T-cell (primary cell): ENCODE measurements at regions of chr1 and their contacts with region 1.

Region 1: GRCh38 chr1:209761011-209761635 is 5.3 kb downstream of the TRAF3IP3 start:
- DNase-seq: no peak
- ATAC-seq: no peak
- H3K4me3 ChIP-seq: peak overlapping the region in 1 of 2 donors; percentile 11
- H3K4me3 Mint-ChIP-seq: peak overlapping the region; percentile 51 to 92 (median 56)
- H3K27ac ChIP-seq: peak overlapping the region; percentile 29
- H3K27ac Mint-ChIP-seq: peak overlapping the region; percentile 87 to 90
- H3K4me1 ChIP-seq: peaks cover 63 to 75% of the 10 kb centered on the region in 2 experiments
- H3K4me1 Mint-ChIP-seq: peaks cover 79 to 92% (median 83%) of the 10 kb centered on the region in 3 donors
- H3K27me3 ChIP-seq: no peaks in the 10 kb centered on the region
- H3K27me3 Mint-ChIP-seq: no peaks in the 10 kb centered on the region

Region 2: GRCh38 chr1:209747580-209748262 is 13.4 kb before region 1 on chr1:
- CTCF ChIA-PET with region 1: interaction called, 21 read pairs
- POLR2A ChIA-PET with region 1: no interaction called
- DNase-seq: peak; percentile 53 to 85 (median 74)
- ATAC-seq: peak; percentile 79 to 86 (median 85)
- H3K4me3 ChIP-seq: peak overlapping the region; percentile 56 to 71
- H3K4me3 Mint-ChIP-seq: peak overlapping the region; percentile 77 to 87 (median 87)
- H3K27ac ChIP-seq: peak overlapping the region; percentile 45
- H3K27ac Mint-ChIP-seq: peak overlapping the region; percentile 97 to 98
- H3K4me1 ChIP-seq: peaks cover 36 to 43% of the 10 kb centered on the region in 2 experiments
- H3K4me1 Mint-ChIP-seq: peaks cover 49 to 60% (median 54%) of the 10 kb centered on the region in 3 donors
- H3K27me3 ChIP-seq: no peaks in the 10 kb centered on the region
- H3K27me3 Mint-ChIP-seq: no peaks in the 10 kb centered on the region